ENCODE measurements at regions of chr1 and their contacts with region 1.

Region 1: GRCh38 chr1:12166834-12167492 is at the start of gene TNFRSF1B:
- DNase-seq: peak; percentile 75 to 91 (median 83)
- ATAC-seq: peak; percentile 22 to 68 (median 61)
- H3K4me3 ChIP-seq: peak within 1 kb of the TSS; percentile 71 to 99 (median 86)
- H3K27ac ChIP-seq: peak within 1 kb of the TSS; percentile 86 to 96 (median 94)
- H3K4me1 ChIP-seq: peaks cover 8 to 82% (median 37%) of the 10 kb centered on the region in 12 donors
- H3K27me3 ChIP-seq: peaks cover 0 to 8% (median 0%) of the 10 kb centered on the region in 9 donors
- CTCF ChIP-seq: no peak
- POLR2A ChIP-seq: peak in 1 of 2 donors; percentile 97
- total RNA-seq, gene TNFRSF1B: 11.2 to 71.0 (median 16.6) TPM

Region 2: GRCh38 chr1:12132092-12132491 is 34.9 kb before region 1 on chr1:
- intact Hi-C with region 1: loop called in 2 of 10 experiments (anchors 5 kb)
- DNase-seq: no peak
- ATAC-seq: peak in 1 of 4 donors; percentile 26
- H3K4me3 ChIP-seq: no peak overlapping the region
- H3K27ac ChIP-seq: peak overlapping the region in 8 of 12 donors; percentile 33 to 88 (median 58)
- H3K4me1 ChIP-seq: peaks cover 0 to 55% (median 13%) of the 10 kb centered on the region in 12 donors
- H3K27me3 ChIP-seq: no peaks in the 10 kb centered on the region
- CTCF ChIP-seq: no peak
- POLR2A ChIP-seq: no peak

Region 3: DNA sequence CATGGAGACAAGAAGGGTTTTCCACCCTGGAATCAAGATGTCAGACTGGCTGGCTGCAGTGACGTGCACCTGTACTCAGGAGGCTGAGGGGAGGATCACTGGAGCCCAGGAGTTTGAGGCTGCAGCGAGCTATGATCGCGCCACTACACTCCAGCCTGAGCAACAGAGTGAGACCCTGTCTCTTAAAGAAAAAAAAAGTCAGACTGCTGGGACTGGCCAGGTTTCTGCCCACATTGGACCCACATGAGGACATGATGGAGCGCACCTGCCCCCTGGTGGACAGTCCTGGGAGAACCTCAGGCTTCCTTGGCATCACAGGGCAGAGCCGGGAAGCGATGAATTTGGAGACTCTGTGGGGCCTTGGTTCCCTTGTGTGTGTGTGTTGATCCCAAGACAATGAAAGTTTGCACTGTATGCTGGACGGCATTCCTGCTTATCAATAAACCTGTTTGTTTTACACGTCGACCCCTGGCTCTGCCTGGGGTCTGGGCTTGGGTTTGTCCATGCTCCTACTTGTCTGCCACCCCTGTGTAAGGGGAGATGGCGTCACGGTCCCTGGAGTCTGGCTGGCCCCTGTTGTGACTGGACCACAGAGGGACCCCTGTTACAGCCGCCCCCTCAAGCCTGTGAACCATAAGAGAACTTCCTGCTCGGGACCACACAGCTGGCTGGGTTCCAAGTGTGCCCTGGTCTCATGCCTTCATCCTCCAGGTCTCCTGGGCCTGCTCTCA is 42.0 kb after region 1 on chr1:
- intact Hi-C with region 1: loop called in 1 of 10 experiments (anchors 5 kb)
- DNase-seq: peak; percentile 78 to 91 (median 83)
- ATAC-seq: peak; percentile 79 to 91 (median 90)
- H3K4me3 ChIP-seq: no peak overlapping the region
- H3K27ac ChIP-seq: peak overlapping the region in 2 of 12 donors; percentile 2 to 21
- H3K4me1 ChIP-seq: peaks cover 0 to 13% (median 6%) of the 10 kb centered on the region in 12 donors
- H3K27me3 ChIP-seq: no peaks in the 10 kb centered on the region
- CTCF ChIP-seq: peak; percentile 85 to 97 (median 92)
- POLR2A ChIP-seq: no peak

Region 4: DNA sequence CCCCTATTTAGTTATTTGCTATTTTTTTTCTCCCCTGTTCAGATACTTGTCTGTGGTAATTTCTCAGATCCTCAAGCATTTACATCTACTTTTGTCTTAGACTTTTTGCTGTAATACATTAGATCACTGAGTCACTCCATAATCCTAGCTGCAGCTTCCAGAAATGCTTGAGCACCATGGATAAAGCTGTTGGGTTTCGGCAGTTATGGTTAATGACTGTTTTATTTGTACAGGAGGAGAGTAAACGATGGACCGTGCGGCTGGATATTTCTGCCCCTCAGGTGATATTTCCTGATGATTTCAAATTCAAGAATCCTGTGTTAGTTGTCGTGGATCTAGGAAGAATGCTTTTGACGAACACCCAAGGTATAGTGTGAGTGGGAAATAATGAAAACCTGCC is 105.8 kb after region 1 on chr1:
- intact Hi-C with region 1: no loop called
- DNase-seq: no peak
- ATAC-seq: no peak
- H3K4me3 ChIP-seq: no peak overlapping the region
- H3K27ac ChIP-seq: no peak overlapping the region
- H3K4me1 ChIP-seq: peaks cover 0 to 7% (median 0%) of the 10 kb centered on the region in 12 donors
- H3K27me3 ChIP-seq: no peaks in the 10 kb centered on the region
- CTCF ChIP-seq: no peak
- POLR2A ChIP-seq: no peak

Measured in heart left ventricle (tissue), 16 donors.